Heart left ventricle (tissue), 16 donors: ENCODE measurements at regions of chr3 and their contacts with region 1.

Region 1: GRCh38 chr3:64399205-64399800 is 174.0 kb upstream of the PRICKLE2 start:
- DNase-seq: peak in 2 of 5 donors; percentile 21 to 44
- ATAC-seq: peak in 3 of 4 donors; percentile 56 to 81 (median 60)
- H3K4me3 ChIP-seq: no peak overlapping the region
- H3K27ac ChIP-seq: no peak overlapping the region
- H3K4me1 ChIP-seq: no peaks in the 10 kb centered on the region
- H3K27me3 ChIP-seq: no peaks in the 10 kb centered on the region
- CTCF ChIP-seq: peak; percentile 52 to 88 (median 82)
- POLR2A ChIP-seq: no peak

Region 2: GRCh38 chr3:63863148-63864007 is 535.9 kb before region 1 on chr3 and contains the starts of genes ATXN7 and THOC7:
- intact Hi-C with region 1: no loop called
- DNase-seq: peak; percentile 72 to 87 (median 78)
- ATAC-seq: peak; percentile 45 to 90 (median 84)
- H3K4me3 ChIP-seq: peak within 1 kb of the TSS; percentile 90 to 99 (median 98)
- H3K27ac ChIP-seq: peak within 1 kb of the TSS; percentile 79 to 96 (median 92)
- H3K4me1 ChIP-seq: peaks cover 3 to 22% (median 15%) of the 10 kb centered on the region in 12 donors
- H3K27me3 ChIP-seq: no peaks in the 10 kb centered on the region
- CTCF ChIP-seq: no peak
- POLR2A ChIP-seq: no peak
- total RNA-seq, gene ATXN7: 9.6 to 31.4 (median 21.2) TPM
- total RNA-seq, gene THOC7: 63.6 to 97.0 (median 77.4) TPM

Region 3: GRCh38 chr3:64163755-64164148 is 235.6 kb before region 1 on chr3:
- intact Hi-C with region 1: loop called in 1 of 10 experiments (anchors 10 kb)
- DNase-seq: no peak
- ATAC-seq: no peak
- H3K4me3 ChIP-seq: no peak overlapping the region
- H3K27ac ChIP-seq: peak overlapping the region in 1 of 12 donors; percentile 66
- H3K4me1 ChIP-seq: peaks cover 0 to 58% (median 24%) of the 10 kb centered on the region in 12 donors
- H3K27me3 ChIP-seq: no peaks in the 10 kb centered on the region
- CTCF ChIP-seq: no peak
- POLR2A ChIP-seq: no peak

Region 4: DNA sequence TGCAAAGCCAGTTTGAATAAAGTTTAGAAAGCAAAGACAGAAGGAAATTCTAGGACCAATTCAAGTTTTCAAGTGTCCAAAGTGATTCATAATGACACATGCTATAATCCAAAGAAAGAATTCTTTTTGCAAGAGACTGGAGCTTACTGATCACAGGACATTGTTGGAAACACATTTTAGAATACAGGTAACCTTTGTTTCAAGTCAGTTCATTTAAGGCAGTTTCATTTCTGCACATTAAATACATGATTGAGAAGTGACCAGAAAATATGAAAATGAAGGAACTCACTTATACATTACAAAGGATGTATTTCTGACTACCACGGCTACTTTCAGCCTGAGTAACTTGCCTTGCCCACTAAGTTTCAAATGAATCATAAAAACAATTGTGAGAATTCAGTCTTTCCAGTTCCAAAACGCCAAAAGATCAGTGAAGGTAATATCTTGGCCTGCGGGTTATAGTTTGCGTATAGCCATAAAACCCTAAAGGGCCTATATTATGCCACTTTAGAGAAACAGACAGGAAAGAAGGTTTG is 222.8 kb before region 1 on chr3:
- intact Hi-C with region 1: loop called in 2 of 10 experiments (anchors 10 kb)
- DNase-seq: no peak
- ATAC-seq: no peak
- H3K4me3 ChIP-seq: no peak overlapping the region
- H3K27ac ChIP-seq: no peak overlapping the region
- H3K4me1 ChIP-seq: peaks cover 0 to 7% (median 0%) of the 10 kb centered on the region in 12 donors
- H3K27me3 ChIP-seq: no peaks in the 10 kb centered on the region
- CTCF ChIP-seq: no peak
- POLR2A ChIP-seq: no peak

Region 5: DNA sequence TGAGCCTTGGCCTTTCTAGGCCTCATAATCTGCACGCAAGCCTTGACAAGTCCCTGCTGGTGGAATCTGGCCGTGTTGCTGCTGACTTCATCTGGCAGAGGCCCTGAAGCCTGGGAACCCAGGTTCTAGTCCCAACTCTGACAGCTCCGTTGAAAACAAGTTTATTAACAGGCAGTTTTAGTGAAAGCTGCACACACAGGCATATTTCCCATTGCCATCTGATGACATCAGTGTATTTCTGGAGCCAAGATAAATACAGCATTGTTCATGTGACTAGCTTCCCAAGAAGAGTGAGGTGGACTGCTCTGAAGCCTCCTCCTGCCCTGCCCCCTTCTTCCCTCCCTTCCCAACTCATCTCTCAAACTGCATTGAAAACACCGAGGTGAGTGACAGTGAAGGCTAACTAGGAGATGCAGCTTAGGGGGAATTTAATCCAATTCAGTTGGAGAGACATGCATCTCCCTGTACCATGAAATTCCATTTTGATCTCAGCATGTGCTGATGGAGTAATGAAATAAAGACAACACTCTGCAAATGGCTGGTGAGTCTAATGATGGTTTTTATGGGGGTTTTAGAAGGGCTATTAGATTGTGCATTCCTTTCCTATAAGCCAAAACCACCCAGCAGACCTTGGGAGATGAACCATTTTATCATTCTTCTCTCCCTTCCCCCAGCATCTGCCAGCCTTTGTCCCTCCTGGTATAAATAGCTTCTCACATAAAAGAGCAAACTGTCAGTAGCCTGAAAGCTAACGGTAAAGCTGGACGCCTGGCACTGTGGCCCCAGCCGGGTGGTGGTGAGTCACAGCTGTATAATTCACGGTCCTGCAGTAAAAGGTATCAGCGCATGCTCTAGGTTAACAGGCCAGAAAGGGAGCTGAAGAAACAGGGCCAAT is 212.0 kb before region 1 on chr3:
- intact Hi-C with region 1: loop called in 1 of 10 experiments (anchors 10 kb)
- DNase-seq: peak; percentile 66 to 78 (median 76)
- ATAC-seq: peak; percentile 67 to 88 (median 78)
- H3K4me3 ChIP-seq: no peak overlapping the region
- H3K27ac ChIP-seq: peak overlapping the region in 11 of 12 donors; percentile 38 to 82 (median 66)
- H3K4me1 ChIP-seq: peaks cover 7 to 71% (median 56%) of the 10 kb centered on the region in 12 donors
- H3K27me3 ChIP-seq: no peaks in the 10 kb centered on the region
- CTCF ChIP-seq: peak in 2 of 12 donors; percentile 6 to 16
- POLR2A ChIP-seq: no peak

Region 6: DNA sequence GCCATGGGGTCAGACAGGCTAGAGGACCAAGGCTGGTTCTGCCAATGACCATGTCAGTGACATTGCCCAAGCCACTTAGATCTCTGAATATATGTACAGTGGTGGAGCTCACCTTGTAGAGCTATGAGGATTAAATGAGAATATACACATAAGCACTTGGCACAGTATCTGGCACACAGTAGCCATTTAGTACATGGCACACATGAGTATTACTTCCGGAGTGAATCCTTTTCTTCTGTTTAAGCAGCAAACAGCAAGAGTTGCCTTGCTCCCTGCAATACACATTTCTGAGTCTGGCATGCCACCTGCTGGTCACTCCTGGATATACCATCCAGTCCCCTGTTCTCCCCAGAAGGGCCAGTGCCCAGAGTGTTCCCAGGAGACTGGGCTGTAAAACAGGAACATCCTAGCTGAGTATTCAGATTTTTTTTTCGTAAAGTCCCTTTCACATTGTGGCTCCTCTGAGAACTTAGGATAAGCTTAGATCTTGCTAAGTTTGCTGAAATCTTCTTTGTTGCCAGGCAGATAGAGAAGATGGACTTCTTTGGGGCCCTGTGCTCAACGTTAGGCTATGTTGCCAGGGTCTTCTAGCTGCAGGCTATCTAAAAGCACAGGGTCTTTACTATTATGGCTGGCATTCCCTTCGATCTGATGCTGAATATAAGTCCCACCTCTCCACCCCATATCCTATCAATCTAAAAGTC is 85.1 kb after region 1 on chr3:
- intact Hi-C with region 1: loop called in 6 of 10 experiments (anchors 1 to 10 kb)
- DNase-seq: peak; percentile 67 to 82 (median 70)
- ATAC-seq: peak; percentile 83 to 94 (median 94)
- H3K4me3 ChIP-seq: no peak overlapping the region
- H3K27ac ChIP-seq: no peak overlapping the region
- H3K4me1 ChIP-seq: peaks cover 0 to 13% (median 1%) of the 10 kb centered on the region in 12 donors
- H3K27me3 ChIP-seq: peaks cover 0 to 2% (median 0%) of the 10 kb centered on the region in 9 donors
- CTCF ChIP-seq: peak; percentile 76 to 95 (median 88)
- POLR2A ChIP-seq: no peak

Region 7: GRCh38 chr3:64489361-64490044 is 90.2 kb after region 1 on chr3:
- intact Hi-C with region 1: loop called in 6 of 10 experiments (anchors 1 to 10 kb)
- DNase-seq: peak in 1 of 5 donors; percentile 42
- ATAC-seq: peak in 3 of 4 donors; percentile 46 to 62 (median 49)
- H3K4me3 ChIP-seq: peak overlapping the region in 2 of 12 donors; percentile 15 to 20
- H3K27ac ChIP-seq: no peak overlapping the region
- H3K4me1 ChIP-seq: peaks cover 0 to 9% (median 0%) of the 10 kb centered on the region in 12 donors
- H3K27me3 ChIP-seq: peaks cover 0 to 29% (median 0%) of the 10 kb centered on the region in 9 donors
- CTCF ChIP-seq: no peak
- POLR2A ChIP-seq: no peak